Right ventricle myocardium inferior (tissue), 1 donor: ENCODE measurements at regions of chr4 and their contacts with region 1.

Region 1: DNA sequence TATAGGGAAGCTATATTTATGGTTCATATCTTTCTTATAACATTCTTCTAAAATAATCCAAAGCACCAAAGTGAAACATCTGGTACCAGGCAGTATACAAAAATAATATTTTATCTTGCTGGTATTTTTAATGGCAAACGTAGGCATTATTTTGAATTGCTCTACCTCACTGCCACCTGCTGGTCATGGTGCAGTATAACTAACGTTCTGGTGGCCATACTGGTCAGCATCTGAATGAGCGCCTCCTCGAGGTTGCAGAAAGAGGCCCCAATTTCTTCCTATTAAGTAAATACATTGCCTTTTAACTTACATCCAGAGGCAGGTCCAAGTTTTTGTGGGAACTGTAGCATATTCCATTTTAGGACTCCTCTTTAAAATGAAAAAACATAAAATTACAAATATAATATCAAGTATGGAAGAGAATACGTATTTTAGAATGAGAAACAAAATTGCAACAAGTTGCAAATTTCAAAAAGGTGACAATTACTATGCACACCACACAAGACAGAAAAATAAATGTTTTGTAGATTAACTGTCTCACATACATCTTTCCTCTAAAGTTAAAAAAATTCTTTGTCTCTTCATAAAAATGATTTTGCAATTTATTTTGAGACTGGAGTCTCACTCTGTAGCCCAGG is 22.9 kb upstream of the CWH43 start:
- DNase-seq: no peak
- ATAC-seq: peak; percentile 76

Region 2: GRCh38 chr4:48445704-48446103 is 517.5 kb before region 1 on chr4:
- intact Hi-C with region 1: loop called (anchors 10 kb)
- DNase-seq: no peak
- ATAC-seq: no peak

Region 3: DNA sequence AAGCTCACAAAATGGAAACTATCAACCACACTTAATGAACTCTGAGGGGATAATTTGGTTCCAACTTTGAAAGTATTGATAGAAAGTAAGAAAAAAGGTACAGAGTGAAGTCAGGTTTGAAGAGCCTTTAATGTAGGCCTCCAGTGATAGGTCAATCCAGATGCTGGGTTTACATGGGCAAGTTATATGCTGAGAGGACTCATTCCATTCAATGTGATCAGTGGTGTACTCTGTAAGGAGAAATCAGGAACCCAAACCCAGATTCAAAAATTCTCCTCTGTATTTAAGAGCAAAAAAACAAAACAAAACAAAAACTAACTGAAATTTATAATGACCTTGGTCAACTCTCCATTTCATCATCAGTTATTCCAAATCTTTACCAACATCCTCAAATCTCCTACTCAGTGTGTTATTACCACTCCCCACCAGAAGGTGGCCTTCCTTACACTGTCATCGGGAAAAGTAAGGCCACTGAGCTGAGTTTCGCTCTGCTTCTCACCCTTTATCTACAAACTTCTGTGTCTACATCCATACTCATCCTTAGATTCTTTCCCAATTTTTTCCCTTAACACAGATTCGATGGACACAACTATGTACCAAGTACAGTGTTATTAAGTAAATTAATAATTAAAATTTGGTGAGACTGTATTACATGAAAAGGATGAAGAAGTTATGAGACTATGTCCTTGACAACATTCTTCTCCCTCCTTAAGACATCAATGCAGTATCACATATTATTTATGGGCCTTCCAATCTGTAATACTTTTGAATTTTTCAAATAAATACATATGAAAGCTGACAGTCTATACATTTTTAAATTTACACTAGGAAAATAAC is 384.8 kb before region 1 on chr4:
- intact Hi-C with region 1: loop called (anchors 2 kb)
- DNase-seq: no peak
- ATAC-seq: peak; percentile 74

Region 4: DNA sequence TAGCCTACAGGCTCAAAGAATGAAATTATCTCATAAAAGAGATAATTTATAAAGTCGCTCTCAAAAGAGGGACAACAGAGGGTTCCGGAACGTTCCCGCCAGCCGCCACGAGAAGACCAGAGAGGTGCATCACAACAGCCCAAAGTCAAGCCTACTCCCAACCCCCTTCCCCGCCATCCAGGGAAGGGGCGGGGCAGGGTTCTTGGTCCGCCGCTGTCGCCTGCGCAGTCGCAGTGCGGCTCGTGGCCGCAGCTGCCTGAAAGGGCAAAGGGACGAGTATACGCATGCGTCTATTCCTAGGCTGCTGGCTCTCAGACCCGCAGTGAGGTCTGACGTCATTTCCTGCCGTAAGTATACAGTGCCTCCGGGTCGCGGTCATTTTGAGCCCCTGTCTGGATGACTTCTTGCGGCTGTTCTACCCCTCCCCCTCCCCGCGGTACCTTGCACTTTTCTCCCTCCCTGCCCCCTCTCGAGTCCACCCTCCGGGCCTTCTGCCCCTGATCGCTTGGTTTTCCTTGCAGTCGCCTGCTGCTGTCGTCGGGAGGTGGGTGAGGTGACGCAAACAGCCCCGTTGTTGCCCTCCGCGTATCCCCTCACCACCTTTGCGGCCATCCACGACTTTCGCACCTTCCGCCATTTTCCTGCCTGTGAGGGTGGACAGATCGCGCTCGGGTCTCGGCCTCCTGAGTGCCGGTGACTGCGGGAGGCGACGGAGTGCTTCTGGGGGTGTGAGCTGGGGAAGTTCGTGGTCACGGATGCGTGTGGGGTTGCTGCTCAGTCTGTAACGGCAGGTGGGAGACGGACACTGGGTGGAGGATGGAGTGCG is 132.2 kb before region 1 on chr4 and contains the start of gene OCIAD1:
- intact Hi-C with region 1: loop called (anchors 10 kb)
- DNase-seq: peak; percentile 98
- ATAC-seq: peak; percentile 100
- total RNA-seq, gene OCIAD1: 128 TPM